ENCODE measurements at regions of chr16 and their contacts with region 1.

Region 1: DNA sequence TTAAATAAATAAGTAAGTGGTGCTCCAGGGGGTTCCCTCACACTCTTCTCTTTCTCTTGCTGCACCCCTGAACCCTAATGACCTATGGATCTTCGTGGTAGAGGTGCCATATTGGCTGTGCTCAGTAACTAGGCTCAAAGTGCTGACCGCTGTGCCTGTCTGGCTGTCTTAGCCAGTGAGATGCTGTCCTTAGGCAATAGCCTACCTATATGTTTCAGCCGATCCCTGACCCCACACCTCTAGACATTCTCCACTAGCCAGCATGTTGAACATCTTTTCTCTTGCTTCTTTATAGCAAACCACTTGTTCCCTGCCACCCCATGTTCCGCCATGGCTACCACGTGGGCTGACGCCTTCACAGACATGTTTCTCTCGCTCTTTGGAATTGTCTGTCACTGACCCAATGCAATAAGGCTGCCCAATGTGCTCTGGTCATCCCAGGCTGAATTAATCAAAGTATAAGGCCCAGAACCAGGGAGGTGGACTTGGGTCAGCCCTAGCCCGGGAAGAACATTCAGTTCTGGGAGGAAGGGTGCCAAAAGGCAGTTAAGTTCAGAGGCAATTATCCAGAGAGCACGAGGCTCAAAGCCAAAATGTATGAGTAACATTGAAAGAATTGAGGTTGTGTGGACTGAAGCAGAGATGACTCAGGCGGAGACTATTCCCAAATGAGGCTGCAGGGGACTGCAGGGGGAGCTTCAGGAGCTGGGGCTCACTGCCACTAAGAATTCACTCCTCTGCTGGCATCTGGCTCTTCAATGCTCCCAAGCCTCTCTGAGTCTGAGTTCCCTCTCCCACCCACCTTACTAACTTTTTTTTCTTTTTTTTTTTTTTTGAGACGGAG is 28.7 kb upstream of the TNRC6A start:
- DNase-seq: peak; percentile 92
- H3K4me3 ChIP-seq: no peak overlapping the region
- H3K27ac ChIP-seq: no peak overlapping the region
- H3K4me1 ChIP-seq: no peaks in the 10 kb centered on the region
- H3K27me3 ChIP-seq: no peaks in the 10 kb centered on the region
- CTCF ChIP-seq: peak; percentile 22

Region 2: GRCh38 chr16:24689145-24689544 is 11.6 kb before region 1 on chr16:
- CTCF ChIA-PET with region 1: no interaction called
- POLR2A ChIA-PET with region 1: no interaction called
- intact Hi-C with region 1: no loop called
- DNase-seq: peak; percentile 73
- H3K4me3 ChIP-seq: no peak overlapping the region
- H3K27ac ChIP-seq: no peak overlapping the region
- H3K4me1 ChIP-seq: no peaks in the 10 kb centered on the region
- H3K27me3 ChIP-seq: no peaks in the 10 kb centered on the region
- CTCF ChIP-seq: peak; percentile 79

Region 3: GRCh38 chr16:24729362-24729984 is 28.7 kb after region 1 on chr16 and contains the start of gene TNRC6A:
- CTCF ChIA-PET with region 1: no interaction called
- POLR2A ChIA-PET with region 1: interaction called, 11 read pairs
- intact Hi-C with region 1: no loop called
- DNase-seq: peak; percentile 93
- H3K4me3 ChIP-seq: peak within 1 kb of the TSS; percentile 78
- H3K27ac ChIP-seq: peak within 1 kb of the TSS; percentile 93
- H3K4me1 ChIP-seq: peaks cover 13% of the 10 kb centered on the region
- H3K27me3 ChIP-seq: no peaks in the 10 kb centered on the region
- CTCF ChIP-seq: no peak
- total RNA-seq, gene TNRC6A: 88.5 and 90.8 TPM in 2 replicates